AG04450 (cell line): ENCODE measurements at regions of chr14 and their contacts with region 1.

Region 1: DNA sequence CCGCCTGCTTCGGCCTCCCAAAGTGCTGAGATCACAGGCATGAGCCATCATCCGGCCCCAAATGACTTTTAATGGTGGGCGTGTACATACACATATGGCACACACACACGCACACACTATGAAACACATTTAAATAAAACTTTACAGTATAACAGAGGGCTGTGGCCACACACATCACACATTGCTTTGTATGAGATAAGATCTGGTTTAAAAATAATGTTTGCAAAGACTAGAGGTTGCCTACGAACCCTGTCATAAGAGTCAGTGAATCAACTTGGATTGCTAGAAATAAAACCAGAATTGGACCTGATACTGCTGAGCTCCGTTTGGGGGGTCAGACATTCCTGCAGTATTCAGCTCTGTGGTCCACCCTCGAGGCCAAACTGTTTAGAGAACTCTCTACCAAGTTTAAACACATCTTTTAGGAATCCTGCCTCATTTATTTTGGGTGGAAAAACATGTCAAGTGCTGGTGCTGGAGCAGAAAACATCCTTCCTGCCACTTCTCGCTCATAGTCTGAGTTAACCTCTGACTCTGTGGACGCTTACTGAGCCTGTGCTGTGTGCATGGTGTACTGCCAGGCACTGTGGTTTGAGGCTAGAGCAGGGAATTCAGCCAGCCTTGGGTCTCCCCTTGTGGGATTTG is 47.8 kb upstream of the EML1 start:
- DNase-seq: peak; percentile 97
- H3K4me3 ChIP-seq: no peak overlapping the region
- H3K27ac ChIP-seq: peak overlapping the region; percentile 97
- H3K27me3 ChIP-seq: no peaks in the 10 kb centered on the region
- CTCF ChIP-seq: no peak

Region 2: GRCh38 chr14:99755629-99756603 is 10.5 kb after region 1 on chr14:
- CTCF ChIA-PET with region 1: interaction called, 4 read pairs
- POLR2A ChIA-PET with region 1: interaction called, 18 read pairs
- DNase-seq: peak; percentile 80
- H3K4me3 ChIP-seq: no peak overlapping the region
- H3K27ac ChIP-seq: peak overlapping the region; percentile 89
- H3K27me3 ChIP-seq: no peaks in the 10 kb centered on the region
- CTCF ChIP-seq: no peak